ENCODE measurements at regions of chr6 and their contacts with region 1.

Region 1: DNA sequence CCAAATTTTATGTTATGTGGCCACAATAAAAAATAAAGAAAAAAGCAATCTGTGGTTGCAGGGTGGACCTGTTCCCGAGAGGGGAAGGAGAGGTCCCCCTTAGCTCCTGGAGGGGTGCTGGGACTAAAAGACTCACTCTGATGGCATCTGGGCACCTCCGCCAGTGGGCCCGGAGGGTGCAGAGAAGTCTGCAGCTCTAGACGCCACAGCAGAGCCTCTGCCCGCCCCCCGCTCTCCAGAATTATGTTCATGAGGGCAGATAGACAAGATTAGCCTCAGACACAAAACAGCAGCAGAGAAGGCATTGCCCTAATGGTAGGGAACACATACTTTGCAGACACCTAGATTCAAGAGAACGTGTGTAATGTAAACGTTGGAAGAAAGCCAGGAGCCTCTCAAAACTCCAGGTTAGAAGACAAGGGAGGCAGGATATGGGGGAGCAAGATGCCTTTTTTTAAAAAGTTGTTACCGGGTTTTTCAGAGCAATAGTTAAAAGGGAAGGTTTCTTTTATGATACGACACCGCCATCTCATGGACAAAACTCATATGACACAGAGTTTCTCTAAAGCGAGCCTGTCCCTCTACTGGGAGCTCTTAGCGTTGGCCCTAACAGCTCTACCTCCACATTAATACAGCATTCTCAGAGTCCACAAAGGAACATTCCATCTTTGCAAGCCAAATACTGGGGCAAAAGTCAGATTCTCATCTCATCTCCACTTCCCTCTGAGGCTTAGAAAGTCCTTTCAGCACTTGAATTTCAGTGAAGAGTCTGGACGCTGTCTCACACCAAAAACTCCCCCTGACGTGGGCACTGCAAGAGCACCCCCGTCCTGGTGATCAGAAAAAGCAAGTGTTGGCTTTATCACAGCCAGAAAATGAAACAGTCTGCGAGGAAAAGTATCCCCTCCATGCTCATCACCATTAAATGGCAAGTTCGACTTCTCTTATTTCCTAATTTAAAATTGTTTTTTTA is 47.2 kb downstream of the FOXF2 start:
- DNase-seq: peak; percentile 32
- H3K4me3 Mint-ChIP-seq: no peak overlapping the region
- H3K27ac Mint-ChIP-seq: no peak overlapping the region
- H3K4me1 Mint-ChIP-seq: no peaks in the 10 kb centered on the region
- H3K27me3 Mint-ChIP-seq: peaks cover 35% of the 10 kb centered on the region

Region 2: GRCh38 chr6:797479-798077 is 639.0 kb before region 1 on chr6:
- CTCF ChIA-PET with region 1: interaction called, 12 read pairs
- POLR2A ChIA-PET with region 1: no interaction called
- intact Hi-C with region 1: loop called (anchors 1 kb)
- DNase-seq: peak; percentile 40
- H3K4me3 Mint-ChIP-seq: no peak overlapping the region
- H3K27ac Mint-ChIP-seq: no peak overlapping the region
- H3K4me1 Mint-ChIP-seq: no peaks in the 10 kb centered on the region
- H3K27me3 Mint-ChIP-seq: peaks cover 48% of the 10 kb centered on the region

Region 3: DNA sequence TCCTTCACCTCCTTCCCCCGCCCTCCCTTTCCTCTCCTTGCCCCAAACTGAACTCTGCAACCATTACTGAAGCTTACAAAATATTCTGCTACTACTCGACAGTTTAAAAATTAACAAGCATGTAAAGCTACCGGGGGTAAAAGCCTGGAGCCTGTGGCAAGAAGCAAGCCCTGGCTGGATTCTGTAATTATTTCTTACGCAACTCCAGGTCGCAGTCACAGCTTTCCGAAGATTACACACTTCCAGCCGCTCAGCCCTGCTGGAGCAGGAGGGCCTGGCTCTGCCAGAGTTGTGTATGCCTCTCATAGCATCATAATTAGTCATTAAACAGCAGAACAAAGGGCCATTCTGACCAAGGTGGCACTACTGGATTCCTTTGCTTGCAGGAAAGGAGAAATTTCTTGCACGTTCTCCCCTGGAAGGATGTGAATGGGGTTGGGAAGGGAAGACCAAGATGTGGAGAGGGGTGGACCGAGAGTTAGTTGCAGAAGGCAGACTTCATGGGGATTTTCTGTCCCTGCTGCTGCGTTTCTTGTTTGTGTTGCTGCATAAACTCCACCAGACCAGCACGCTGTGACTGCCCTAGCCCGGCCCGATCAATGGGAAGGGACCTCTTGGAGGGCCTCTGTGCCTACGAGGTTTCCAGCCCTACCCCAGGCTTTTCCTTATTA is 101.1 kb before region 1 on chr6:
- CTCF ChIA-PET with region 1: no interaction called
- POLR2A ChIA-PET with region 1: no interaction called
- intact Hi-C with region 1: no loop called
- DNase-seq: no peak
- H3K4me3 Mint-ChIP-seq: no peak overlapping the region
- H3K27ac Mint-ChIP-seq: no peak overlapping the region
- H3K4me1 Mint-ChIP-seq: no peaks in the 10 kb centered on the region
- H3K27me3 Mint-ChIP-seq: peaks cover 25% of the 10 kb centered on the region

Region 4: GRCh38 chr6:1670702-1671462 is 234.3 kb after region 1 on chr6:
- CTCF ChIA-PET with region 1: no interaction called
- POLR2A ChIA-PET with region 1: no interaction called
- intact Hi-C with region 1: no loop called
- DNase-seq: no peak
- H3K4me3 Mint-ChIP-seq: no peak overlapping the region
- H3K27ac Mint-ChIP-seq: no peak overlapping the region
- H3K4me1 Mint-ChIP-seq: no peaks in the 10 kb centered on the region
- H3K27me3 Mint-ChIP-seq: no peaks in the 10 kb centered on the region